ENCODE measurements at regions of chr3 and their contacts with region 1.

Region 1: GRCh38 chr3:118262800-118263402 is 771.7 kb downstream of the IGSF11 start:
- DNase-seq: no peak
- ATAC-seq: no peak
- H3K4me3 ChIP-seq: no peak overlapping the region
- H3K4me1 ChIP-seq: no peaks in the 10 kb centered on the region
- CTCF ChIP-seq: no peak

Region 2: GRCh38 chr3:117746066-117746465 is 516.8 kb before region 1 on chr3:
- intact Hi-C with region 1: no loop called
- DNase-seq: no peak
- ATAC-seq: no peak
- H3K4me3 ChIP-seq: no peak overlapping the region
- H3K4me1 ChIP-seq: no peaks in the 10 kb centered on the region
- CTCF ChIP-seq: no peak

Region 3: DNA sequence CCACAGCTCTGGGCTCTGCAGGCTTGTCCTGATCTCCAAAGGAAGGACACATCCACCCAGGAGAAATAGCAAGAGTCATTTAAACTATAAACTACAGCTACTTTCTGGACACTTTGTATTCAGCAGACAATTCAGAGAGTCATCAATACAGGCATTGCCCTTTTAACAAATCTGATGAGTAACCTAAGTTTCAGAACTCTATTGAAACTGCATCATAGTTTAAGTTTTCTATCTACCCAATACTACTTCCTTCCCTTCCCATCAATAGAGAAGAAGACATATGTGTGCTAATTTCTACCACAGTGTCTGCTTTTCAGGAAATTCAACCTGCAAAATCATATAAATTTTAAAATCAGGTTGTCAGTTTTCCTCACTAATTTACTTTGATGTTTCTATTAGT is 35.2 kb after region 1 on chr3:
- intact Hi-C with region 1: loop called in 1 of 2 experiments (anchors 2 kb)
- DNase-seq: no peak
- ATAC-seq: no peak
- H3K4me3 ChIP-seq: no peak overlapping the region
- H3K4me1 ChIP-seq: no peaks in the 10 kb centered on the region
- CTCF ChIP-seq: no peak

Measured in mucosa of descending colon (tissue), 3 donors.